K562 (cell line): ENCODE measurements at regions of chr15 and their contacts with region 1.

Region 1: DNA sequence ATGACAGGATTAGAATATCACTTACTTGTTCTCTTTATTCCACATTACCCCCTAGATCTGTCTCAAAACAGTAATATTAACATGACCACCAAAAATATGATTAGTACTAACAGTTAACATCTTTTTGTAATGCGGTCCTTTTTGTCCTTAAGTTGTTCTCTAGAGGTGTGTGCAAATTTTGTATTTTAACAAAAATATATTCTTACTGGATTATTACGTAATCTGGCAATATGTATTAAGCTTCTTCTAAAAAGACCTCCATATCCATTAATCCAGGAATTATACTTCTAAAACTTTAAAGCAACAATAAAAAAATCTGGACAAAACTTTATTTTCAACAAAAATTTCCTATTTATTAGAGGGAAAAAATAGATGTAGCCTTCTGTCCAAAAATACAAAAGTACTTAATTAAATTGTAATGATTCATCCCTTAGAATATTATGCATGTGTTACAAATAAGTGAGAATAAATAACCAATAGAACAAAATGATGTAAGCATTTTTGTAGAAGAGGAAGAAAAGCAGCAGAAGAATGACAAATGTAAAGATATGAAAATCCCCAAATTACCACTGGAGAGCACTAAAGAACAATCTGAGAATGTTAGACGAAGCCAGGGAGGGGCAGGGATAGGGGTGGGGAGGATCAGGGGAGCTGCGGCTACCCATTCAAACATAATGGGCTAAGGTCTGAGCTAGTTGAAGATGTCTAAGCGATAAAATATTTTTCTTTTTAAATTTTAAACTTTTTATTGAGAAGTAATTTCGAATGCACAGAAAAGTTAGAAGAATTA is 945.6 kb downstream of the MCTP2 start:
- DNase-seq: peak in 2 of 4 experiments; percentile 36 to 61
- ATAC-seq: peak; percentile 93
- H3K4me3 ChIP-seq: no peak overlapping the region
- H3K27ac ChIP-seq: 0 out of 3 replicates have a peak overlapping the region, but pooled peaks have one; percentile 9
- H3K4me1 ChIP-seq: peaks cover 3 to 7% of the 10 kb centered on the region in 2 experiments; a peak in 3 of 5 replicates
- H3K27me3 ChIP-seq: no peaks in the 10 kb centered on the region
- CTCF ChIP-seq: peak in 2 of 3 experiments; percentile 34 to 48; a peak in 3 of 6 replicates
- EP300 ChIP-seq: no peak
- POLR2A ChIP-seq: no peak
- RAD21 ChIP-seq: peak in 1 of 2 experiments; percentile 56; a peak in 2 of 4 replicates

Region 2: DNA sequence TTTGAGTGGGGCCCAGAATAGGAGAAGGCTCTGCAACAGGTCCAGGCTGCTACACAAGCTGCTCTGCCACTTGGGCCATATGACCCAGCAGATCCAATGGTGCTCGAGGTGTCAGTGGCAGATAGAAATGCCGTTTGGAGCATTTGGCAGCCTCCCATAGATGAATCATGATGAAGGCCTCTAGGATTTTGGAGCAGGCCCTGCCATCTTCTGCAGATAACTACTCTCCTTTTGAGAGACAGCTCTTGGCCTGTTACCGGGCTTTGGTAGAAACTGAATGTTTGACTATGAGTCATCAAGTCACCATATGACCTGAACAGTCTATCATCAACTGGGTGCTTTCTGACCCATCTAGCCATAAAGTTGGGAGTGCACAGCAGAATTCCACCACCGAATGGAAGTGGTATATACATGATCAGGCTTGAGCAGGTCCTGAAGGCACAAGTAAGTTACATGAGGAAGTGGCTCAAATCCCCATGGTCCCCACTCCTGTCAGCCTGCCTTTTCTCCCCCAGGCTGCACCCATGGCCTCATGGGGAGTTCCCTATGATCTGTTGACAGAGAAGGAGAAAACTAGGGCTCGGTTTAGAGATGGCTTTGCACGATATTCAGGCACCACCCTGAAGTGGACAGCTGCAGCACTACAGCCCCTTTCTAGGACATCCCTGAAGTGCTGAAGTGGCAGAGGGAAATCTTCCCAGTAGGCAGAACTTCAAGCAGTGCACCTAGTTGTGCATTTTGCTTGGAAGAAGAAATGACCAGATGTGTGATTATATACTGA is 25.8 kb after region 1 on chr15:
- CTCF ChIA-PET with region 1: no interaction called
- POLR2A ChIA-PET with region 1: no interaction called
- in situ Hi-C with region 1: no loop called
- intact Hi-C with region 1: no loop called
- DNase-seq: peak in 1 of 4 experiments; percentile 9
- ATAC-seq: no peak
- H3K4me3 ChIP-seq: no peak overlapping the region
- H3K27ac ChIP-seq: no peak overlapping the region
- H3K4me1 ChIP-seq: no peaks in the 10 kb centered on the region
- H3K27me3 ChIP-seq: no peaks in the 10 kb centered on the region
- CTCF ChIP-seq: no peak
- EP300 ChIP-seq: no peak
- POLR2A ChIP-seq: no peak
- RAD21 ChIP-seq: no peak

Region 3: GRCh38 chr15:95291898-95292472 is 115.0 kb after region 1 on chr15:
- CTCF ChIA-PET with region 1: no interaction called
- POLR2A ChIA-PET with region 1: no interaction called
- in situ Hi-C with region 1: no loop called
- intact Hi-C with region 1: loop called (anchors 1 kb)
- DNase-seq: peak; percentile 40 to 64 (median 59)
- ATAC-seq: peak; percentile 86
- H3K4me3 ChIP-seq: no peak overlapping the region
- H3K27ac ChIP-seq: no peak overlapping the region
- H3K4me1 ChIP-seq: no peaks in the 10 kb centered on the region
- H3K27me3 ChIP-seq: peaks cover 7 to 32% of the 10 kb centered on the region in 2 experiments
- CTCF ChIP-seq: peak; percentile 50 to 70 (median 62); a peak in 5 of 6 replicates
- EP300 ChIP-seq: no peak
- POLR2A ChIP-seq: no peak
- RAD21 ChIP-seq: peak; percentile 40 to 70; a peak in 3 of 4 replicates